Psoas muscle (tissue), 8 donors: ENCODE measurements at regions of chr9 and their contacts with region 1.

Region 1: DNA sequence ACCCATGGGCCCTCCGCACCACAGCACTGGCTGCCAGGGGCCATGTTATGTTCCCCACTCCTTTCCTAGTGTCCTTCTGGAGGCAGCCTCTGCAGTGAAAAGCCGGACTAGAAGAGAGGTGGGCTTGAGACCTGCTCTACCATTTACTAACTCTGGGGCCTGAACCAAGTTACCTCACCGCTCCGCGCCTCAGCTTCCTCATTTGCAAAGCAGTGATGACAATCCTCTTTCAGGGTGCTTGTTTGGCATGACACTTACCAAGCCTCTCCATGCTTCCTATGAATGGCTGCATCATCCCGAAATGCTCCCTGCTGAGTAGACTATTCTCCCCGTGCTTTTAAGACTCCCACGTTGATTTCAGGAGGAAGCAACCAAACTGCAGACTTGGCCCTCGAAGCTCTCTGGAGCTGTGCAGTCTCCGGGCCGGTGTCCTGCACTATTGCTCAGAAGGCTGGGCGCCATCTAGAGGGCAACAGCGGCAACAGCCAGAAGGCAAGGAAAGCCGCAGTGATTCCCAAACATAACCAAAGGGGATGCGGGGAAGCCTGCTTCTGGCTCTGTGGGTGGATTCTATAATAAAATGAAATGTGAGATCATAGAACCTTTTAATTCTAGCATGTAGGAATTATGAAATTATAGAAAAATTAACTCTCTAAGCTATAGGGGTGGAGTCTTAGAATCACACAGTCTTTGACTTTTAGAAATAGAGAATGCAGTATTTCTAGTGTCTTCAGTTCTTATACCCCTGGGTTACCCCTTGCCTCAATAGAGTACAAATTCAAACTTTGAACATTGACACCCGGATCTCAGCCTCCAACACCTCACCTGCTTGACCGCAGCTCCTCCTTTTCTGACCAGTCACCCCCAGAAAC is 599.8 kb upstream of the BRINP1 start:
- DNase-seq: peak; percentile 76 to 85
- ATAC-seq: peak; percentile 76 to 87 (median 86)
- H3K4me3 ChIP-seq: no peak overlapping the region
- H3K27ac ChIP-seq: no peak overlapping the region
- H3K4me1 ChIP-seq: peaks cover 3% of the 10 kb centered on the region
- H3K27me3 ChIP-seq: no peaks in the 10 kb centered on the region
- CTCF ChIP-seq: peak; percentile 85

Region 2: DNA sequence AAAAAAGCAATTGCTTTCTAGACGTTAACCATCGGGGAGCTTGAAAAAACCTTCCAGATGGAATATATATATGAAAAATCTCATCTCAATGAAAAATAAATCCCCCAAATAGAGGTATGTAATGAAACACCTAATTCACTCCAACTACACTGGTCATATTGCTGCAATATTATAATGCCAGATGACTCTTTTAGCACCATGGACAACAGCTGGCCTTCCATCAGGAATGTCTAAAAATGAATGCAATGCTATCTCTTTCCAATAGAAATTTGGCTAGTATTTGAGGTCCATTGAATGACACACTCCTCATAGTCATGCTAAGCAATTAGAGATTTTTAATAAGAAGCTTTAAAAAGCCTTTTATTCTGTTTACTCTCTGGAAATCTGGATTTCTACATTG is 259.6 kb before region 1 on chr9:
- intact Hi-C with region 1: no loop called
- DNase-seq: no peak
- ATAC-seq: no peak
- H3K4me3 ChIP-seq: no peak overlapping the region
- H3K27ac ChIP-seq: no peak overlapping the region
- H3K4me1 ChIP-seq: no peaks in the 10 kb centered on the region
- H3K27me3 ChIP-seq: no peaks in the 10 kb centered on the region
- CTCF ChIP-seq: no peak

Region 3: DNA sequence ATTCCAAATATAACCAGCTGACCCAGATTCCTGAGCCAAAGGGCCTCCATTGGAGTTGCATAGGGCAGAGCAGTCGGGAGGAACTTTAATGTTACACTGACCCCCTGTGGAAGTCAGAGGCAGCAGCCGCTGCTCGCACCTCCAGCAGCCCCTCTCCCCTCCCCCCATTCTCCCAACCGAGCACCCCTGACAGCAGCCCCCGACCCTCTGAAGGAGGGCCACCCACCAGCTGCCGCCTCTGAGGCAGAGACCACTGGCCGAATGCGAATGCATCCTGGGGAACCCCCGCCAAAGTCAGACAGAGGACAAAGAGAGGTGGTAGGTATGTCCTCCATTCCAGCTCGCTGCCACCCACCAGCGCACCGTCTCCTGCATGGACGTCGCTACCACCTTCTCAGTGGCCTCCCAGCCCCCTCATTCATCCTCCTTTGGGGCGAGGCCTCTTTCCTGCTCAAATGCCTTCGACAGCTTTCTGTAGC is 379.9 kb after region 1 on chr9:
- intact Hi-C with region 1: loop called in 1 of 2 experiments (anchors 10 kb)
- DNase-seq: peak in 1 of 2 donors; percentile 52
- ATAC-seq: peak; percentile 70 to 92 (median 87)
- H3K4me3 ChIP-seq: no peak overlapping the region
- H3K27ac ChIP-seq: no peak overlapping the region
- H3K4me1 ChIP-seq: no peaks in the 10 kb centered on the region
- H3K27me3 ChIP-seq: no peaks in the 10 kb centered on the region
- CTCF ChIP-seq: peak; percentile 61

Region 4: GRCh38 chr9:120477521-120478001 is 508.5 kb after region 1 on chr9:
- intact Hi-C with region 1: loop called (anchors 5 kb)
- DNase-seq: peak; percentile 66 to 81
- ATAC-seq: peak; percentile 83 to 90 (median 86)
- H3K4me3 ChIP-seq: no peak overlapping the region
- H3K27ac ChIP-seq: peak overlapping the region; percentile 58
- H3K4me1 ChIP-seq: peaks cover 30% of the 10 kb centered on the region
- H3K27me3 ChIP-seq: no peaks in the 10 kb centered on the region
- CTCF ChIP-seq: peak; percentile 97